Right cardiac atrium (tissue), 5 donors: ENCODE measurements at regions of chr11 and their contacts with region 1.

Region 1: GRCh38 chr11:93741094-93741881 is at the starts of genes C11orf54 and TAF1D:
- DNase-seq: peak; percentile 98 to 99 (median 98)
- ATAC-seq: peak; percentile 98
- H3K4me3 ChIP-seq: peak within 1 kb of the TSS; percentile 65
- H3K27ac ChIP-seq: peak within 1 kb of the TSS; percentile 93
- H3K4me1 ChIP-seq: peaks cover 9% of the 10 kb centered on the region
- H3K27me3 ChIP-seq: no peaks in the 10 kb centered on the region
- total RNA-seq, gene C11orf54: 28.0 to 36.9 (median 33.4) TPM
- total RNA-seq, gene TAF1D: 36.3 to 52.1 (median 38.6) TPM

Region 2: DNA sequence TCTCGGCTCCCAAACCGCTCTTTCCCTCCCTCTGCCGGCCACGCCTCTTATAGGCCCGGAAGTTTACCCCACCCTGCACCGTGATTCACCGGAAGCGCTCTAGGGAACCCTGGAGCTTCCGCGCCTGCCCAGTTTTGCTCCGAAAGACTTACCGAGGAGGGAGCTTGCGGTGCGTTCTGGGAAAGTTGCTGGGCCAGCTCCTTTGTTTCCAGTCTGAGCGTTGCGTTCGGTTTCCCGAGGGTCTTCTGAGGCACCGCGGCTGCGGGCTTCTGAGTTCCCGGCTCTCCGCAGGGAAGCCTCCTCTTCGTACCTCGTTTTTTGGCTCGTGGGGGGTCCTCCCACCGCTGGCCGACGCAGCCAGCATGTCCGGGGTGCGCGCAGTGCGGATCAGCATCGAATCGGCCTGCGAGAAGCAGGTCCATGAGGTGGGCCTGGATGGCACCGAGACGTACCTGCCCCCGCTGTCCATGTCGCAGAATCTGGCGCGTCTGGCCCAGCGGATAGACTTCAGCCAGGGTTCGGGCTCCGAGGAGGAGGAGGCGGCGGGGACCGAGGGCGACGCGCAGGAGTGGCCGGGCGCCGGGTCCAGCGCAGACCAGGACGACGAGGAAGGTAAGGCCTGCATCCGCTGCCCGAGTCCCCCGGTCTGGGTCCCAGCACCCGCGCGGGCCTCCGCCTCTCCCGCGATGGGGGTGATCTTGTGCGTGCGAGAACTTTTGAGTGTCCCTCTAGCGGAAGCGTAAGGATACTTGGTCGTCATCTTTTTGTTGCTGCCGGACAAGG is 43.1 kb after region 1 on chr11 and contains the start of gene MED17:
- intact Hi-C with region 1: loop called in 1 of 4 experiments (anchors 2 kb)
- DNase-seq: peak; percentile 94 to 96 (median 95)
- ATAC-seq: peak; percentile 100
- H3K4me3 ChIP-seq: peak within 1 kb of the TSS; percentile 68
- H3K27ac ChIP-seq: peak within 1 kb of the TSS; percentile 92
- H3K4me1 ChIP-seq: peaks cover 2% of the 10 kb centered on the region
- H3K27me3 ChIP-seq: no peaks in the 10 kb centered on the region
- total RNA-seq, gene MED17: 19.8 to 25.1 (median 22.8) TPM

Region 3: DNA sequence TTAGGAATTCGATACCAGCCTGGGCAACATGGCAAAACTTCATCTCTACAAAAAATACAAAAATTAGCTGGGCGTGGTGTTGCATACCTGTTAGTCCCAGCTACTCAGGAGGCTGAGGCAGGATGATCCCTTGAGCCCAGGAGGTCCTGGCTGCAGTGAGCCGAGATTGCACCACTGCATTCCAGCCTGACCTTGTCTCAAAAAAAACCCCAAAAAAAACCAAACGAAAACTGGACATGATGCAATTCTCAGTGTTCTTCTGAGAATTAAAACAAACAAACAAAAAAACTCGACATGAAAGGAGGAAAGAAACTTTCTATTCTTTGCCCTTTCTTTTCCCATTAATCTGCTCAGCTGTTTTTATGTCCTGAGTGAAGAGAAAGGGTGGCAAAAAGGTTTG is 50.2 kb after region 1 on chr11:
- intact Hi-C with region 1: loop called in 1 of 4 experiments (anchors 10 kb)
- DNase-seq: no peak
- ATAC-seq: no peak
- H3K4me3 ChIP-seq: no peak overlapping the region
- H3K27ac ChIP-seq: no peak overlapping the region
- H3K4me1 ChIP-seq: no peaks in the 10 kb centered on the region
- H3K27me3 ChIP-seq: no peaks in the 10 kb centered on the region

Region 4: GRCh38 chr11:93952082-93952780 is 210.9 kb after region 1 on chr11:
- intact Hi-C with region 1: no loop called
- DNase-seq: no peak
- ATAC-seq: no peak
- H3K4me3 ChIP-seq: no peak overlapping the region
- H3K27ac ChIP-seq: no peak overlapping the region
- H3K4me1 ChIP-seq: no peaks in the 10 kb centered on the region
- H3K27me3 ChIP-seq: no peaks in the 10 kb centered on the region